GM18951 (cell line): ENCODE measurements at regions of chr19 and their contacts with region 1.

Region 1: DNA sequence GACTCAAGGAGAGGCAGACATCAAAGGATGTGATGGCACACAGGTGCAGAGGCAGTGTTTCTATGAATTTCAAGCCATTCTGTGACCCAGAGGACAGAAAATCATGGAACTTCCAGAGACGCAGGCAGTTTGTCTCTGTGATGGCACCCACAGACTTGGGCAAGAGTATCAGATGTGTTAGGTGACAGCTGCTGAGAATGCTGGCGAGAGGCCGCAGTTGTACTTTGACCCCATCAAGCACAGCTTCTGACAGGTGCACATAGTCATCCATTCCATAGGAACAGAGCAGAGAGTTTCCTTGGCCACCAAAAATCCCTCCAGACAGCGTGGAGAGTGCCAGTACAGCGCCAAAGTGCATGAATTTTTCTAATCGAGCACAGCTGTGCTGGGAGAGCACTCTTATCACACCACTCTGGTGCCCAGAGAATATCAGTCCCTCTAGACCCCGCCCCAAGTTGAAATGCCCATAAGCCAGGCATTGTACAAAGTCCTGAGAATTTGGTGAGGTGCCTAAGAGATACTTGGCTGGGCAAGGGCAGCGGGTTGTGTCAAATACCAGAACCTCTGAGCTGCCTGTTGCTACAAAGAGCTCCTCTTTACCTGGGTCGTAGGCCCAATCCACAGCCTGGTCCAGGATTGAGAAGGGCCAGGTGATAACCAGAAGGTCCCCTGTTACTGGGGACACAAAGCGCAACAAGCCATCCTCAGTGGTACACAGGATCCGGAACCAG is 12.4 kb downstream of the WDR87 start:
- POLR2A ChIP-seq: no peak

Region 2: DNA sequence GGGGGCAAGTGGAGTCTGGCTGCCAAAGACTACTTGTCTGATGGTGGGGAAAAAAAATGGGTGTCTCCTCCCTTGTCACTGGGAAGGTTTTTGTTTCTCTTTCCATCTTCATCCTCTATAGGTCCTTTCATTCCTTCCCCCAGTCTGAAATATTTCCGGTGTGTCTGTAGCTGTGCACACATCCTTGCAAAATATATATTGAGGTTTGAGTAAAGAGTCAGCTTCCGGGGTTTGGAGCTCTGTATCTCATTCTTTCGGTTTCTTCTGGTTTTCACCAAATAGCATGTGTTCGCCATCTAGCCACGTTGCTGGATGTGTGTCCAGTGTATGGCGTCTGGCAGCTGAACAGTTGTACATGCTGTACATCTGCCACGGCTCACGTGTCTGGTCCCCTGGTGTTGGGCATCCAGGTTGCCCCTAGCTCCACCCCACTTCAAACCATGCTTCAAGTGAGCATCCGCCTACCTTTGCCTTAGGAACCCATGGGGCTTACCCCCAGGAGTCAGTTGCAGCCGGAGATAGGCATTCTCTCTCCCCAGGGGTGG is 155.2 kb after region 1 on chr19:
- in situ Hi-C with region 1: no loop called
- POLR2A ChIP-seq: peak; percentile 49

Region 3: GRCh38 chr19:38134540-38135149 is 240.6 kb after region 1 on chr19:
- in situ Hi-C with region 1: no loop called
- POLR2A ChIP-seq: no peak

Region 4: GRCh38 chr19:38315657-38316476 is 421.9 kb after region 1 on chr19 and contains the start of gene YIF1B:
- in situ Hi-C with region 1: loop called (anchors 10 kb)
- POLR2A ChIP-seq: peak; percentile 47